ENCODE measurements at regions of chr12 and their contacts with region 1.

Region 1: DNA sequence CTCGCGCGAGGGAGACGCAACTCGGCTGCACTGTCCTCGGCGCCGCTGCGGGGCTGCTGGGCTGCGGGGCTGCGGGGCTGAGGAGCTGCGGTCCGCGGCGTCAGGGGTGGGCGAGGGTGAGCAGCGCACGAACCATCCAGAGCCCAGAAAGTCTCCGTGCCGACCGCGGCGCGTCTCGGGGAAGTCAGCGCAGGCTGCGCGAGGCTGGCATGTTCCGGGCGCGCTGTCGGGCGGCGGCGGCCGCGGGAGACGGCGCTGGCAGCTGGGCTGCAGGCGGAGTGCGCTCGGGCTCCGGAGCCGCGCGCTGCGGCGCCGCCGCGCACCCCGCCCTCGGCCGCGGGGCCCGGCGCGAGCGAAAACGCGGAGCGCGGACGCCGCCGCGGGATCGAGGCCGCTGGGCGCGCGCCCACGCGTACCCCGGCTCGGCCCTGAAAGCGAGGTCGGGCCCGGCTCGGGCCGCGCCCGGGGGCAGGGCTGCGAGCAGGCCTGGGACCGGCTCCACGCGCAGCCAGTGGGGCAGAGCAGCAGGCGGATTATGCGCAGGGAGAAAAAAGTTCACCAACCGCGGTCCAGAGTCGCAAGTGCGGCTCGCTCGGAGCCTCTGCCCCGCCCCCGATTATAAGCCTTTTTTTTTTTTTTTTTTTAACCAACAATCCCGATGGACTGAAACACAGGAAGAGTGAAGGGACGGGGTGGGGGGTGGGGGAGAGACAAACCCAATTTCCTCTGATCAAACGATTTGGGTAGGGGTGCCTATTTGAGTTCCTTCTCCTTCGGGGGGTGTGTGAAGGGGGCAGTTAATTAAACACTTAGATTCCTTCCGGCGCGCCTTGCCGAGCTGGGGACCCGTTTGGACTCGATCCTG is at the start of gene PRICKLE1:
- DNase-seq: peak; percentile 59 to 72
- ATAC-seq: peak; percentile 84 to 89 (median 88)
- H3K4me3 ChIP-seq: peak within 1 kb of the TSS; percentile 92
- H3K27ac ChIP-seq: peak within 1 kb of the TSS; percentile 53
- H3K4me1 ChIP-seq: peaks cover 11% of the 10 kb centered on the region
- H3K27me3 ChIP-seq: no peaks in the 10 kb centered on the region
- CTCF ChIP-seq: no peak
- total RNA-seq, gene PRICKLE1: 1.7 to 7.6 (median 2.4) TPM

Region 2: GRCh38 chr12:42468921-42469320 is 120.8 kb before region 1 on chr12:
- intact Hi-C with region 1: no loop called
- DNase-seq: no peak
- ATAC-seq: no peak
- H3K4me3 ChIP-seq: no peak overlapping the region
- H3K27ac ChIP-seq: no peak overlapping the region
- H3K4me1 ChIP-seq: peaks cover 4% of the 10 kb centered on the region
- H3K27me3 ChIP-seq: no peaks in the 10 kb centered on the region
- CTCF ChIP-seq: no peak

Region 3: DNA sequence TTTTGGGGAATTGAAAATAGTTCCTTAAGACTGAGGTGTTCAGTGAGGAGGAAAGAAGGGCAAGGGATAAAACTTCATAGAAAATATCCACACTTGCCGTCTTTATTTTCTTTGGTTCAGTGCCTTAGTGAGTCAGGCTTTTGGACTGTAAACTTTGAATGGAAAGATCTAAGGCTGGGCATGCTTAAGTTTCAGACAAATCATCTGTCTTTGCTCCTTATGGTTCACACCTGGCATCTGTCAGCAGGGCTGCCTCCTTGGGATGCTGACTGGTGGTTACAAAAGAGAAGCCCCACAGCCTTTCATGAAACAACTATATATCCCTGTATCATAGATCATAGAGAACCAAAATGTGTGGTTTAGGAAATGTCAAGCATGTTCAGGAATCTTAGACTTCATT is 136.1 kb after region 1 on chr12:
- intact Hi-C with region 1: no loop called
- DNase-seq: no peak
- ATAC-seq: no peak
- H3K4me3 ChIP-seq: no peak overlapping the region
- H3K27ac ChIP-seq: no peak overlapping the region
- H3K4me1 ChIP-seq: no peaks in the 10 kb centered on the region
- H3K27me3 ChIP-seq: no peaks in the 10 kb centered on the region
- CTCF ChIP-seq: no peak

Region 4: GRCh38 chr12:42744539-42745156 is 155.0 kb after region 1 on chr12:
- intact Hi-C with region 1: loop called in 1 of 2 experiments (anchors 10 kb)
- DNase-seq: no peak
- ATAC-seq: peak in 3 of 4 donors; percentile 71 to 77 (median 74)
- H3K4me3 ChIP-seq: no peak overlapping the region
- H3K27ac ChIP-seq: peak overlapping the region; percentile 74
- H3K4me1 ChIP-seq: peaks cover 38% of the 10 kb centered on the region
- H3K27me3 ChIP-seq: no peaks in the 10 kb centered on the region
- CTCF ChIP-seq: no peak

Region 5: GRCh38 chr12:43282106-43282505 is 692.4 kb after region 1 on chr12:
- intact Hi-C with region 1: loop called in 1 of 2 experiments (anchors 5 kb)
- DNase-seq: no peak
- ATAC-seq: no peak
- H3K4me3 ChIP-seq: no peak overlapping the region
- H3K27ac ChIP-seq: no peak overlapping the region
- H3K4me1 ChIP-seq: no peaks in the 10 kb centered on the region
- H3K27me3 ChIP-seq: no peaks in the 10 kb centered on the region
- CTCF ChIP-seq: peak; percentile 40

Region 6: DNA sequence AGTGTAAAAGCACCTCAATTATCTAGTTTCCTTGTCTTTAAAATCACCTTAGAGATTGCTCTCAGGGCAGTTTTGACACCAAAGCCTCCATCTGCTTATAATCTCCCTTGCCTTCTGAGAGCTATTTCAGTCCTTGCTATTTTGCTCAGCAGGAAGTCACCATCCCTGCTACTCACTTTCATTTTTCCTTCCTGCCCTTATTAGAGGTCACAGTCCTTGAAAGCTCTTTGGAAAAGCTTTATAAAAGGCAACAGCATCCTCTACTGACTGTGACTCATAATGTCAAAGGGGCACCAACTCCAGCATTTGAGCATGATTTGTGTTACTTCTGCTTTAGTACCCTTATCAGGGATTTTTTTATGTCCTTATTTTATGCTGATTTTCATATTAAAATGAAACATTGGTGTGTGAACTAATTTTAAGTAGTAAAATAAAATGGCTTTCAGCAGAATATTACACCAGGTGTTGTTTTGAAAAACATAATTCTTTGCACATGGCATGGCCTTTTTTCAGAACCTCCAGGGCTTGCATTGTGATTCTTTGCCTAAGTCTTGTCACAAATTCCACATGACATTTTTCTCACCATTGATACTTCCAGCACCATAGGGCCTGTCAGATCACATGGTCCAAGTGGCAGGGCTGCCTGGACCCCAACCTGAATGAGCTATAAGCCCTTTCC is 749.3 kb after region 1 on chr12:
- intact Hi-C with region 1: loop called in 1 of 2 experiments (anchors 5 kb)
- DNase-seq: no peak
- ATAC-seq: peak; percentile 47 to 81 (median 62)
- H3K4me3 ChIP-seq: no peak overlapping the region
- H3K27ac ChIP-seq: no peak overlapping the region
- H3K4me1 ChIP-seq: no peaks in the 10 kb centered on the region
- H3K27me3 ChIP-seq: no peaks in the 10 kb centered on the region
- CTCF ChIP-seq: peak; percentile 31